ENCODE measurements at regions of chr6 and their contacts with region 1.

Region 1: GRCh38 chr6:62285612-62286469 is at the start of gene KHDRBS2:
- DNase-seq: peak; percentile 86
- ATAC-seq: peak; percentile 99
- H3K4me3 Mint-ChIP-seq: peak within 1 kb of the TSS; percentile 95
- H3K27ac Mint-ChIP-seq: peak within 1 kb of the TSS; percentile 80
- H3K4me1 Mint-ChIP-seq: peaks cover 36% of the 10 kb centered on the region
- H3K27me3 Mint-ChIP-seq: no peaks in the 10 kb centered on the region
- CTCF ChIP-seq: no peak
- total RNA-seq, gene KHDRBS2: 5.5 and 6.9 TPM in 2 replicates

Region 2: GRCh38 chr6:61886608-61887259 is 399.1 kb before region 1 on chr6:
- CTCF ChIA-PET with region 1: interaction called, 22 read pairs
- POLR2A ChIA-PET with region 1: no interaction called
- intact Hi-C with region 1: loop called (anchors 1 kb)
- DNase-seq: no peak
- ATAC-seq: peak; percentile 31
- H3K4me3 Mint-ChIP-seq: no peak overlapping the region
- H3K27ac Mint-ChIP-seq: no peak overlapping the region
- H3K4me1 Mint-ChIP-seq: peaks cover 2% of the 10 kb centered on the region
- H3K27me3 Mint-ChIP-seq: no peaks in the 10 kb centered on the region
- CTCF ChIP-seq: no peak

Region 3: GRCh38 chr6:62150048-62150663 is 135.7 kb before region 1 on chr6:
- CTCF ChIA-PET with region 1: interaction called, 8 read pairs
- POLR2A ChIA-PET with region 1: no interaction called
- intact Hi-C with region 1: loop called (anchors 5 kb)
- DNase-seq: no peak
- ATAC-seq: peak; percentile 62
- H3K4me3 Mint-ChIP-seq: no peak overlapping the region
- H3K27ac Mint-ChIP-seq: no peak overlapping the region
- H3K4me1 Mint-ChIP-seq: no peaks in the 10 kb centered on the region
- H3K27me3 Mint-ChIP-seq: no peaks in the 10 kb centered on the region
- CTCF ChIP-seq: no peak

Region 4: GRCh38 chr6:62367601-62368000 is 81.8 kb after region 1 on chr6:
- CTCF ChIA-PET with region 1: interaction called, 3 read pairs
- POLR2A ChIA-PET with region 1: interaction called, 3 read pairs
- intact Hi-C with region 1: loop called (anchors 1 kb)
- DNase-seq: no peak
- ATAC-seq: peak; percentile 89
- H3K4me3 Mint-ChIP-seq: peak overlapping the region; percentile 79
- H3K27ac Mint-ChIP-seq: peak overlapping the region; percentile 85
- H3K4me1 Mint-ChIP-seq: peaks cover 25% of the 10 kb centered on the region
- H3K27me3 Mint-ChIP-seq: no peaks in the 10 kb centered on the region
- CTCF ChIP-seq: no peak

Region 5: GRCh38 chr6:63635588-63636517 is 1350.0 kb after region 1 on chr6 and contains the start of gene PHF3:
- CTCF ChIA-PET with region 1: no interaction called
- POLR2A ChIA-PET with region 1: no interaction called
- intact Hi-C with region 1: loop called (anchors 5 kb)
- DNase-seq: peak; percentile 89
- ATAC-seq: peak; percentile 88
- H3K4me3 Mint-ChIP-seq: peak within 1 kb of the TSS; percentile 95
- H3K27ac Mint-ChIP-seq: peak within 1 kb of the TSS; percentile 94
- H3K4me1 Mint-ChIP-seq: peaks cover 46% of the 10 kb centered on the region
- H3K27me3 Mint-ChIP-seq: no peaks in the 10 kb centered on the region
- CTCF ChIP-seq: no peak
- total RNA-seq, gene PHF3: 52.4 and 56.7 TPM in 2 replicates

Measured in activated B cell treated with CpG ODN at 0.5 μM for 24 hours (primary cell).